ENCODE measurements at regions of chr6 and their contacts with region 1.

Region 1: DNA sequence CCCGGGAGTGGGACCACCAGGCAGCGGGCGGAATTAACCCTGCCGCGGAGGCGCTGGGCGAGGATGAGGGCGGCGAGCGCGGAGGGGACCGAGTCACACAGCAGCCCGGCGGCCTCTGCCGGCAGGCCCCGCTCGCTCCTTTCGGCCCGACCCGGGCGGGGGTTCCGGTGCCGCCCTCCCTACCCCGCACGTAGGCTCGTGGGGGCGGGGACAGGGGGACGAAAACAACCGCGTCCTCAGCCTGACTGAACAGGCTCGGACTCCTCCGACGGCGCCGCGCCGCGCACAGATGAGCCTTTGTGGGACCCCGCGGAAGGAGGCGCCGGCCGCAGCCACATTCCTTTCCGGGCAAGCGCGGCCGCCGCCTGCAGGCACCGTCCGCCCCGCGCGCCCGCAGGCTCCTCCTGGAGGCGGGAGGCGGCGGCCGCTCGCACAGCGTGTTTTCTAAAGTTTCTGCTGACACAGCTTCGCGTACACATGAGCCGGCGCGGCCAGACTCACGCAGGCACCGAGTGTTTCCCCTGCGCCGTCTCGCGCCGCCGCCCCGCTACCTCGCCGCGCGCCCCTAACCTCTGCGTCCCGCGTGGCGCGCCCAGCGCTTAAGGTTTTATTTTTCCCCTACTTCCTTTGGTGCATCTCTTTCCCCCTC is 244.3 kb downstream of the ARID1B start:
- DNase-seq: peak; percentile 91 to 92
- ATAC-seq: peak; percentile 93 to 96 (median 94)
- H3K4me3 ChIP-seq: peak overlapping the region; percentile 59 to 88 (median 78)
- H3K27ac ChIP-seq: peak overlapping the region; percentile 94 to 100 (median 98)
- H3K4me1 ChIP-seq: peaks cover 0 to 63% (median 47%) of the 10 kb centered on the region in 9 donors
- H3K27me3 ChIP-seq: no peaks in the 10 kb centered on the region
- CTCF ChIP-seq: peak in 8 of 9 donors; percentile 29 to 71 (median 48)

Region 2: GRCh38 chr6:156699017-156699421 is 322.4 kb before region 1 on chr6:
- intact Hi-C with region 1: loop called in 1 of 10 experiments (anchors 10 kb)
- DNase-seq: no peak
- ATAC-seq: no peak
- H3K4me3 ChIP-seq: no peak overlapping the region
- H3K27ac ChIP-seq: no peak overlapping the region
- H3K4me1 ChIP-seq: peaks cover 0 to 4% (median 0%) of the 10 kb centered on the region in 9 donors
- H3K27me3 ChIP-seq: no peaks in the 10 kb centered on the region
- CTCF ChIP-seq: no peak

Region 3: DNA sequence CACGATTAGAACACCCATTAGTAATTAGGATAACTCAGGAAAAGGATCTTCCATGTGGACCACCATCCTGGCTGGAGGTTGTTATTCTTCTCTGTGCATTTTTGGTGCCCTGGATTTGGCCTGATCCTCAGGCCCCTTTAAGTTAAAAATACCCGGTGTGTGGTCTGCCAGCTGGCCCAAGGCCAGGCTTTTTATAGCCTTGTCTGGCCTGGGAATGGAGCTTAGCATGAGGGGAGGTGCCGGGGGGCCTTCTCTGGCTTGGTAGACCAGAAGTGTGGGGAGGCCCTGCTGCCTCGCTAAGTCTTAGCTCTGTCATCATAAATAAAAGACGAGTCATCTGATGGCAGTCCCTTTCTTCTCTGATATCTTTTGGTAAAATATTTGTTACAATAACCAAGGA is 172.9 kb before region 1 on chr6:
- intact Hi-C with region 1: no loop called
- DNase-seq: peak; percentile 81 to 89
- ATAC-seq: peak; percentile 82 to 91 (median 85)
- H3K4me3 ChIP-seq: peak overlapping the region in 5 of 10 donors; percentile 5 to 20 (median 9)
- H3K27ac ChIP-seq: peak overlapping the region in 9 of 10 donors; percentile 2 to 78 (median 66)
- H3K4me1 ChIP-seq: peaks cover 35 to 100% (median 99%) of the 10 kb centered on the region in 9 donors
- H3K27me3 ChIP-seq: no peaks in the 10 kb centered on the region
- CTCF ChIP-seq: no peak

Region 4: GRCh38 chr6:156876302-156876701 is 145.2 kb before region 1 on chr6:
- intact Hi-C with region 1: loop called in 2 of 10 experiments (anchors 5 to 10 kb)
- DNase-seq: peak in 1 of 2 donors; percentile 47
- ATAC-seq: peak in 6 of 8 donors; percentile 18 to 63 (median 44)
- H3K4me3 ChIP-seq: no peak overlapping the region
- H3K27ac ChIP-seq: peak overlapping the region in 1 of 10 donors; percentile 17
- H3K4me1 ChIP-seq: peaks cover 2 to 80% (median 55%) of the 10 kb centered on the region in 9 donors
- H3K27me3 ChIP-seq: no peaks in the 10 kb centered on the region
- CTCF ChIP-seq: peak in 8 of 9 donors; percentile 5 to 50 (median 34)

Region 5: DNA sequence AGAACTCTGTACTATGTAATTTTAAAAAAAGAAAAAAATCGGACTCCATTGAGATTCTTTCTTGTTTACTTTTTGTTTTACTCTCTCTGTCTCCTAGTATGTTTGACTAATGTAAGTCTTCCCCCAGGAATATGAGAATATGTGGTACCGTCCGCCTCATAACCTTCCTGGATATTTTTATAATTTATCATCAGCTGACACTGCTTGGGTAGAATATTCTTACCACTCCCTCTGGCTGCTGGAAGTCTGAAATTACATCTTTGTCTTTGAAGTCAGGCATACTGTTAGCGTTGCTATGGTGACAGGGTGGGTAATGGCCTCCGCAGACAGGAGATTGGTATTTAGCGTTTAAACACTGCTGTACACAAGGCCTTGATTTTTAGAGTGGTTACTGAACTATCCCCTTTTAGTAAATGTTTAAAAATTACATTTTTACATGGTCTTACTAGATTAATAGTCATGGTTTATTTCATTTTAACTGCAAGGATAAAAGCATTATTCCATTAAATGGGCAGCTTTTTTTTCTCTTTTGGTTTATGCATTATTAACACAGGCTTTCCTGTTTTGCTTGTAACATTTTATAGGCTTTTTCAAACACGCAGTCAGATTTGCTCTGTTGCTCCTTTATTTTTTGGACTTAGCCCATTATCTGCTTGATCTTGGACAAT is 67.9 kb before region 1 on chr6:
- intact Hi-C with region 1: loop called in 3 of 10 experiments (anchors 1 to 5 kb)
- DNase-seq: peak in 1 of 2 donors; percentile 68
- ATAC-seq: peak; percentile 62 to 88 (median 79)
- H3K4me3 ChIP-seq: peak overlapping the region in 6 of 10 donors; percentile 6 to 23 (median 14)
- H3K27ac ChIP-seq: peak overlapping the region in 9 of 10 donors; percentile 8 to 75 (median 36)
- H3K4me1 ChIP-seq: peaks cover 15 to 97% (median 87%) of the 10 kb centered on the region in 9 donors
- H3K27me3 ChIP-seq: no peaks in the 10 kb centered on the region
- CTCF ChIP-seq: peak in 7 of 9 donors; percentile 38 to 71 (median 44)

Region 6: GRCh38 chr6:156976216-156977127 is 45.0 kb before region 1 on chr6:
- intact Hi-C with region 1: loop called in 1 of 10 experiments (anchors 5 kb)
- DNase-seq: no peak
- ATAC-seq: peak in 3 of 8 donors; percentile 25 to 38 (median 35)
- H3K4me3 ChIP-seq: peak overlapping the region in 7 of 10 donors; percentile 2 to 37 (median 29)
- H3K27ac ChIP-seq: peak overlapping the region in 1 of 10 donors; percentile 13
- H3K4me1 ChIP-seq: peaks cover 0 to 92% (median 71%) of the 10 kb centered on the region in 9 donors
- H3K27me3 ChIP-seq: no peaks in the 10 kb centered on the region
- CTCF ChIP-seq: no peak